ENCODE measurements at regions of chr6 and their contacts with region 1.

Region 1: GRCh38 chr6:108947114-108947854 is 99.1 kb downstream of the ARMC2 start:
- DNase-seq: peak in 1 of 5 donors; percentile 43
- ATAC-seq: peak in 3 of 4 donors; percentile 35 to 55 (median 48)
- H3K4me3 ChIP-seq: no peak overlapping the region
- H3K27ac ChIP-seq: peak overlapping the region; percentile 83 to 97 (median 94)
- H3K4me1 ChIP-seq: peaks cover 12 to 73% (median 65%) of the 10 kb centered on the region in 12 donors
- H3K27me3 ChIP-seq: no peaks in the 10 kb centered on the region
- CTCF ChIP-seq: peak in 1 of 12 donors; percentile 9
- POLR2A ChIP-seq: peak in 1 of 2 donors; percentile 37

Region 2: DNA sequence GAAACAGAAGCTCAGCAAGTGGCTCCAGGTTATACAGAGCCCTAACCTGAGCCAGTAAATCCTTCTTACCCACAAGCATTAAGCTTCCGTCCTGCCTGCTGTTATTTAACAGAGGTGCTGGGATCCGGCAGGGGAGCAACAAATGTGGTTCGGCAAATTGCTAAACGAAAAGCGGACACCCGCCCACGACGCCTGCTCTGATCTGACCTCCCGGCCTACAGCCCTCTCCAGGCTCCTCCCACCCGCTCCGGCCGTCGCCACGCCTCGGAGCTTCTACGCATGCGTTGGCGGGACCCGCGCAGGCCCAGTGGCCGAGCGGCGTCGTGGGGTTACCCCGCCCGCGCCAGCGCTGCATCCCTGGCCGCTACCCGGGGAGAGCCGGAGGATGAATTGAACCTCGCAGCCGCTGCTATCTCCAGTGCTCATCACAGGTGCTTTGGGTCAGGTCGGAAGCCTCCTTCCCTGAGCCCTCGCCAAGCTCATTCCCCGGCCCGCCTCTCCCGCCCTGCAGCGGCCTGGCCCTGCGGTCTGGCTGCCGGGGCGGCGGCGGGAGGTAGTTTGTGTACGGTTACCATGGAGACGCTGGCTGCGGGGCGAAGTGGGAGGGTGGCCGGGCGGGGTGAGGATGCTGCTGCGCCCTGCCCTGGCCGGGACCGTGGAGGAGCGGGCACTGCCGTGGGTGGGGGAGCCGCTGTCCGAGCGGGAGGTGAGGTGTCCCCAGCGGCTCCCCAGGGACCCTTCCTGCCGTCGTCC is 99.0 kb before region 1 on chr6 and contains the start of gene ARMC2:
- intact Hi-C with region 1: loop called in 2 of 10 experiments (anchors 2 to 10 kb)
- DNase-seq: peak; percentile 94 to 99 (median 96)
- ATAC-seq: peak; percentile 95 to 98 (median 96)
- H3K4me3 ChIP-seq: peak within 1 kb of the TSS; percentile 59 to 92 (median 76)
- H3K27ac ChIP-seq: peak within 1 kb of the TSS; percentile 66 to 94 (median 88)
- H3K4me1 ChIP-seq: peaks cover 0 to 58% (median 29%) of the 10 kb centered on the region in 12 donors
- H3K27me3 ChIP-seq: no peaks in the 10 kb centered on the region
- CTCF ChIP-seq: peak in 2 of 12 donors; percentile 10 to 14
- POLR2A ChIP-seq: peak; percentile 66
- total RNA-seq, gene ARMC2: 5.7 to 18.0 (median 10.2) TPM

Region 3: GRCh38 chr6:108896111-108896661 is 51.1 kb before region 1 on chr6:
- intact Hi-C with region 1: loop called in 7 of 10 experiments (anchors 5 to 10 kb)
- DNase-seq: no peak
- ATAC-seq: peak in 3 of 4 donors; percentile 29 to 45 (median 31)
- H3K4me3 ChIP-seq: no peak overlapping the region
- H3K27ac ChIP-seq: peak overlapping the region; percentile 40 to 90 (median 66)
- H3K4me1 ChIP-seq: peaks cover 0 to 58% (median 26%) of the 10 kb centered on the region in 12 donors
- H3K27me3 ChIP-seq: no peaks in the 10 kb centered on the region
- CTCF ChIP-seq: no peak
- POLR2A ChIP-seq: no peak

Region 4: DNA sequence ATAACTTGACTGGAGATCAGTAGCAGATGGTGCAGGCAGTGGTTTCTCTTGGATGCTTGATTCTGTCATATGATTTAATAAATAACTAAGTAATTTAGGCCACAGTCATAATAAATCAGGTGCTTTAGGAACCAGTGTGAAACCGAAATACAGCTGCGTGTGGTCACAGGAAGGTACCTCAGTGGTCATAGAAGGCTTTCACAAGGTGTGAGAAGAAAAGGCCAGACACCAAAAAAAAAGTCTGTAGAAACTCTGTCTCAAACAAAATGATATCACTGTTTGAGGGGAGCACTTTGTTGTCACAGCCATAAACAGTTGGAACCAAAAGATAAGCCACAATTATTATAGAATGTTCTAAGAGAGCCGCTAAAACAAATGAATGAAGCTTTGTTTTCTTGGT is 42.5 kb before region 1 on chr6:
- intact Hi-C with region 1: loop called in 8 of 10 experiments (anchors 2 to 10 kb)
- DNase-seq: no peak
- ATAC-seq: no peak
- H3K4me3 ChIP-seq: no peak overlapping the region
- H3K27ac ChIP-seq: peak overlapping the region in 2 of 12 donors; percentile 2 to 4
- H3K4me1 ChIP-seq: peaks cover 0 to 54% (median 7%) of the 10 kb centered on the region in 12 donors
- H3K27me3 ChIP-seq: no peaks in the 10 kb centered on the region
- CTCF ChIP-seq: no peak
- POLR2A ChIP-seq: no peak

Region 5: GRCh38 chr6:108966855-108967755 is 19.8 kb after region 1 on chr6:
- intact Hi-C with region 1: loop called in 2 of 10 experiments (anchors 1 to 2 kb)
- DNase-seq: peak; percentile 65 to 84 (median 72)
- ATAC-seq: peak; percentile 43 to 92 (median 81)
- H3K4me3 ChIP-seq: peak overlapping the region in 1 of 12 donors; percentile 3
- H3K27ac ChIP-seq: peak overlapping the region; percentile 52 to 88 (median 76)
- H3K4me1 ChIP-seq: peaks cover 4 to 48% (median 24%) of the 10 kb centered on the region in 12 donors
- H3K27me3 ChIP-seq: no peaks in the 10 kb centered on the region
- CTCF ChIP-seq: no peak
- POLR2A ChIP-seq: peak in 1 of 2 donors; percentile 33

Region 6: GRCh38 chr6:109002051-109002697 is 54.9 kb after region 1 on chr6:
- intact Hi-C with region 1: loop called in 7 of 10 experiments (anchors 5 to 10 kb)
- DNase-seq: no peak
- ATAC-seq: peak; percentile 50 to 69 (median 60)
- H3K4me3 ChIP-seq: peak overlapping the region in 3 of 12 donors; percentile 6 to 14 (median 8)
- H3K27ac ChIP-seq: peak overlapping the region; percentile 34 to 89 (median 69)
- H3K4me1 ChIP-seq: peaks cover 5 to 89% (median 53%) of the 10 kb centered on the region in 12 donors
- H3K27me3 ChIP-seq: no peaks in the 10 kb centered on the region
- CTCF ChIP-seq: no peak
- POLR2A ChIP-seq: peak in 1 of 2 donors; percentile 7

Region 7: DNA sequence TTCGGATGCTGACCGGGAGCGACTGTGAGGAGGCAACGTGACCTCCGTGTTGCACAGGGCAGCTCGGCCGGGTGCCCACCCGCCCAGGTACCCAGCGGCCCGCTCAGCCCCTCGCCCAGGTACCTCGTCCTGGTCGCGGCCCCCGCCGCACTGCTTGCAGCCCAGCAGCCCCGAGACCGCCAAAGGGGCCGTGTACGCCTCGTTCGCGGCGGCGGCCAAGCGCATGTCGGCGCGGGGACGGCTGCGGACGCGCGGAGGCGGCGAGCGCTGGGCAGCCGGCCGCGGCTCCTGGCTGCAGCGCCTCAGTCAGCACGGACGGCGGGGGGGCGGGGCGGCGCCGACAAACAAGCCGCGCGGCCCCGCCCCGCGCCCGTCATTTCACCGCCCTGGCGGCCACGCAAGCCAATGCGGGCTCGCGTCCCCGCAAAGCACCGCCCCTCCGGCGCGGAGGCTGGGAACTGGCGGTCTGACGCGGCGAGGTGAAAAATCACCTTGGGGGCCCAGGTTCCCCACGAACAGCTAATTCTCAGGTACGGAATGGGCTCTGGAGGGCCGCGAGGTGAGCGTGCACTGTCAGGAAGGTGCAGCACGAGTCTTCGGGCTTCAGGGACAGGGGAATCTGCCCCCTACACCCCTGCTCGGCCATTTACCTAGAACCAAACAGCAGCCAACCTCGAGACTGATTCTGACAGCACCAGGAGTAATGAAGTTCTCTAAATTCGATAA is 62.1 kb after region 1 on chr6:
- intact Hi-C with region 1: loop called in 8 of 10 experiments (anchors 2 to 10 kb)
- DNase-seq: peak; percentile 95 to 98 (median 96)
- ATAC-seq: peak; percentile 86 to 99 (median 96)
- H3K4me3 ChIP-seq: peak overlapping the region; percentile 61 to 93 (median 85)
- H3K27ac ChIP-seq: peak overlapping the region; percentile 85 to 98 (median 93)
- H3K4me1 ChIP-seq: peaks cover 0 to 84% (median 37%) of the 10 kb centered on the region in 12 donors
- H3K27me3 ChIP-seq: no peaks in the 10 kb centered on the region
- CTCF ChIP-seq: peak in 9 of 12 donors; percentile 8 to 50 (median 29)
- POLR2A ChIP-seq: peak; percentile 73 to 96

Region 8: DNA sequence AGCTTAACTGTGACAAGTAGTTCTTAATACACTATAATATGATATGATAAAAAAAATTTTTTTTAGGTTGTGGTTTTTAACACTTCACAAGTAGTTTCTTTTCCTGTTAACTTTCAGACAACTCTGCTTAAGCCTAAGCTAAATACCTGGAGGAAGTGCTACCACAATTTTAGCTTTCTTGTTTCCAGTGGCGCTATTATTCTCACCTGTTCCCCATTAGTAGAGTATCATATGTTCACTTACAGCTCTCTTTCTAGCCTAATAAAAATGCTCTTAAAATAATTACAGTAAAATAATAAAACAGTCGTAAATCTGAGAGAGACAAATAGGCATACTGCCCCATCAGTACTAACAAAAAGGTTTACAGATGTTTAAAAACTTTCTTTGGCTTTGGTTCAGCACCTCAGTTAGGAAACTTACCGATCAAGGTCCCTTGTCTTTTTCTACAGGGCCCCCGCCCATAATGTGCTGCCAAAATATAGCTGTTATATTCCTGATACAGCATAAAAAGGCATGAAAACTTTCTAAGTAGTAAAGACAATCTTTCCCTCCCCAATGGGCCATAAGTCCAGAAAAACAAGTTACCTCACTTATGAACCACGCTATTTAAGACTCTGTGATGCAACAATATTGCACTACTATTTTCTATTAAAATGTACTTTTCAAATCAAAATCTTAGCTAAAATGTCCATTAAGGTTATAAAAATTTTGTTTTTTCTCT is 89.5 kb after region 1 on chr6:
- intact Hi-C with region 1: no loop called
- DNase-seq: no peak
- ATAC-seq: no peak
- H3K4me3 ChIP-seq: no peak overlapping the region
- H3K27ac ChIP-seq: no peak overlapping the region
- H3K4me1 ChIP-seq: peaks cover 0 to 49% (median 20%) of the 10 kb centered on the region in 12 donors
- H3K27me3 ChIP-seq: no peaks in the 10 kb centered on the region
- CTCF ChIP-seq: no peak
- POLR2A ChIP-seq: no peak

Measured in heart left ventricle (tissue), 16 donors.